Activated B cell treated with CpG ODN at 0.5 μM for 24 hours (primary cell): ENCODE measurements at regions of chr16 and their contacts with region 1.

Region 1: GRCh38 chr16:85027349-85027957 is at the start of gene KIAA0513:
- DNase-seq: peak; percentile 99
- ATAC-seq: peak; percentile 87
- H3K4me3 Mint-ChIP-seq: peak within 1 kb of the TSS; percentile 89
- H3K27ac Mint-ChIP-seq: peak within 1 kb of the TSS; percentile 88
- H3K4me1 Mint-ChIP-seq: peaks cover 42% of the 10 kb centered on the region
- H3K27me3 Mint-ChIP-seq: peaks cover 11% of the 10 kb centered on the region
- CTCF ChIP-seq: no peak
- total RNA-seq, gene KIAA0513: 0.62 and 1.1 TPM in 2 replicates

Region 2: GRCh38 chr16:85010931-85011845 is 16.3 kb before region 1 on chr16 and contains the start of gene ZDHHC7:
- CTCF ChIA-PET with region 1: interaction called, 3 read pairs
- POLR2A ChIA-PET with region 1: interaction called, 51 read pairs
- intact Hi-C with region 1: loop called (anchors 1 kb)
- DNase-seq: peak; percentile 80
- ATAC-seq: peak; percentile 89
- H3K4me3 Mint-ChIP-seq: peak within 1 kb of the TSS; percentile 97
- H3K27ac Mint-ChIP-seq: peak within 1 kb of the TSS; percentile 98
- H3K4me1 Mint-ChIP-seq: peaks cover 38% of the 10 kb centered on the region
- H3K27me3 Mint-ChIP-seq: peaks cover 11% of the 10 kb centered on the region
- CTCF ChIP-seq: no peak
- total RNA-seq, gene ZDHHC7: 24.4 and 26.9 TPM in 2 replicates

Region 3: DNA sequence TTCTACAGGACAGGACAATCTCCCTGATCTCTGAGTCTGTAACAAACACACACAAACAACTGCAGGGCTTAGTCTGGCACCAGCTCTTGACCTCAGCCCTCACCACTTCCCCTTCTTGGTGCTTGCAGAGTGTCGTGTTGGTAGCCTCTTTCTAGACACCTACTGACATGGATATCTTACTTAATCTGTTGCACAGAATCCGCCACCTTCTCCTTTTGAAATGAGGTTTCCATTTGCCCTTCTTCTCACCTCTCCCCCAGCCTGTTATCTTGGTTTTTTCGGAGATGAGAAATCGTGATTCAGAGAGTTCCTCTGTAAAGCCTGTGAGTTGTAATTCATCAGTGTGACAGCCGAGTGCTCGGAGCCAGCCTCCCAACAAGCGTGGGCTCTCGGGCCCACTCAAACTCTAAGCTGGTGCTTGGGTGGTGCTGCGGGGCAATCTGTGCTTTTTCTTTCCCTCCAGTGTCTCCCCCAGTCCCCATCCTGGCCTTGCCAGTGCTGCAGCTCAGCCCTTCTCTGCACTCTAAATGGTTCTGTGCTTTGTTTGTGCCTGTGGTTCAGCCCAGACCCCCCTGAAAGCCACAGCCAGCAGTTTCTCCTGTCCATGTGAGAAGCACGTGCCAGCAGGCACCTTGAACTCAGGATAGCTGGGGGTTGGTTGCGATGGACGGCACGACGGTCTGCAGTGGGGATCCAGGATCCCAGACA is 28.2 kb after region 1 on chr16:
- CTCF ChIA-PET with region 1: no interaction called
- POLR2A ChIA-PET with region 1: interaction called, 5 read pairs
- intact Hi-C with region 1: loop called (anchors 2 kb)
- DNase-seq: no peak
- ATAC-seq: peak; percentile 89
- H3K4me3 Mint-ChIP-seq: peak overlapping the region; percentile 78
- H3K27ac Mint-ChIP-seq: peak overlapping the region; percentile 84
- H3K4me1 Mint-ChIP-seq: peaks cover 38% of the 10 kb centered on the region
- H3K27me3 Mint-ChIP-seq: peaks cover 8% of the 10 kb centered on the region
- CTCF ChIP-seq: no peak